Calu3 (cell line): ENCODE measurements at regions of chr16 and their contacts with region 1.

Region 1: DNA sequence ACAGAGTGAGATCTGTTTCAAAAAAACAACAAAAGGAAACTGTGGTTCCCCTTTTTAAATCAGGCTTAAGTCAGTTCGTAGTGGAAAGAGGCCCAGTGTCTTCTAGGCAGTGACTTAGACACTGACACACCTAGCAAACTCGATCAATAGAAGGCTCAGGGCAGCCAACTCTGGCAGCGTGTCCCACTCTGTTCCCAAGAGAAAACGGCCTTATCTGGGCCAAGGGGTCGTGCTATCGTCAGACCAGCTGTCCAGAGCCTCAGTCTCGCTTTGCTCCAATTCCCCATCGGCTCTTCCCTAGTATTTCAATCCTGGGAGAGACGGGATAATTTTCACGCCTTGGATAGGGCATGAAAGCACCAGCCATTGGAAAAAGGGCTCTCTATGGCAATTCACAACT is 72.9 kb downstream of the SLC5A11 start:
- DNase-seq: no peak
- H3K4me3 Mint-ChIP-seq: no peak overlapping the region
- H3K27ac Mint-ChIP-seq: no peak overlapping the region
- H3K4me1 Mint-ChIP-seq: no peaks in the 10 kb centered on the region
- H3K27me3 Mint-ChIP-seq: no peaks in the 10 kb centered on the region
- CTCF ChIP-seq: no peak

Region 2: GRCh38 chr16:24895606-24896005 is 23.0 kb before region 1 on chr16:
- CTCF ChIA-PET with region 1: interaction called, 11 read pairs
- intact Hi-C with region 1: no loop called
- DNase-seq: no peak
- H3K4me3 Mint-ChIP-seq: no peak overlapping the region
- H3K27ac Mint-ChIP-seq: no peak overlapping the region
- H3K4me1 Mint-ChIP-seq: peaks cover 9% of the 10 kb centered on the region
- H3K27me3 Mint-ChIP-seq: peaks cover 28% of the 10 kb centered on the region
- CTCF ChIP-seq: no peak